Colonic mucosa (tissue), 4 donors: ENCODE measurements at regions of chr13 and their contacts with region 1.

Region 1: DNA sequence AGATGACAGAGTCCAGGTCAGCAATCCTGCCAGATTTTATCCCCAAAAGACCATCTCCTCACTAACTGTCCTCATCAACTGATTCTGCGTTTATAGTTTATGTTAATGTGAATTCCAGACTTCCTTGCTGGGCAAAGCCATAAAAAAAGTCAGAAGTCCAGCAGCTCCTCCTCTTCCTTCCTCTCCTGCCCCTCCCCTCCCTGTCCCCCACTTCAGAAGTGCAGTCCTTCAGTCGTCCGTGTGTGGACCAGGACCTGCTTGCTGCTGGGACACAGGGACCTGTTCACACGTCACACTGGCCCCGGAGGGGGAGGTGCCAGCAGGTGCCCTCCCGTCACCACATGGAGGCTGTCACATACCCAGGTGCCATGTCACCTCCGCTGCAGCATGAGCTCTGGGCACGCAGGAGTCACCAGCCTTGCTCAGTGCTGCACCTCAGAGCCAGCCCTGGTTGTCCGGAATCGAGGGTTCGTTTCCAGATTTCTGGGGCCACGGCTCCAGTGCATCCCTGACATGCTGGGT is 4.0 kb upstream of the MCF2L start:
- DNase-seq: no peak
- H3K4me3 ChIP-seq: no peak overlapping the region
- H3K27ac ChIP-seq: no peak overlapping the region
- H3K4me1 ChIP-seq: no peaks in the 10 kb centered on the region
- H3K27me3 ChIP-seq: peaks cover 7% of the 10 kb centered on the region
- CTCF ChIP-seq: no peak

Region 2: GRCh38 chr13:113001241-113002140 is 36.5 kb after region 1 on chr13:
- intact Hi-C with region 1: loop called (anchors 2 kb)
- DNase-seq: peak; percentile 52
- H3K4me3 ChIP-seq: peak overlapping the region; percentile 37
- H3K27ac ChIP-seq: no peak overlapping the region
- H3K4me1 ChIP-seq: peaks cover 21% of the 10 kb centered on the region
- H3K27me3 ChIP-seq: no peaks in the 10 kb centered on the region
- CTCF ChIP-seq: no peak